CD4-positive, alpha-beta memory T cell (primary cell): ENCODE measurements at regions of chr10 and their contacts with region 1.

Region 1: GRCh38 chr10:49518982-49519578 is 19.8 kb downstream of the ERCC6 start:
- DNase-seq: peak in 4 of 5 donors; percentile 38 to 46 (median 40)
- H3K4me3 ChIP-seq: no peak overlapping the region
- H3K4me3 Mint-ChIP-seq: no peak overlapping the region
- H3K27ac ChIP-seq: no peak overlapping the region
- H3K27ac Mint-ChIP-seq: peak overlapping the region in 1 of 7 donors; percentile 64
- H3K4me1 ChIP-seq: no peaks in the 10 kb centered on the region
- H3K4me1 Mint-ChIP-seq: peaks cover 6 to 10% (median 8%) of the 10 kb centered on the region in 4 donors
- H3K27me3 ChIP-seq: no peaks in the 10 kb centered on the region
- H3K27me3 Mint-ChIP-seq: no peaks in the 10 kb centered on the region

Region 2: GRCh38 chr10:48363617-48364355 is 1155.3 kb before region 1 on chr10:
- CTCF ChIA-PET with region 1: interaction called, 3 read pairs
- POLR2A ChIA-PET with region 1: no interaction called
- intact Hi-C with region 1: loop called (anchors 10 kb)
- DNase-seq: peak in 4 of 5 donors; percentile 20 to 34 (median 25)
- H3K4me3 ChIP-seq: no peak overlapping the region
- H3K4me3 Mint-ChIP-seq: no peak overlapping the region
- H3K27ac ChIP-seq: no peak overlapping the region
- H3K27ac Mint-ChIP-seq: no peak overlapping the region
- H3K4me1 ChIP-seq: peaks cover 5% of the 10 kb centered on the region
- H3K4me1 Mint-ChIP-seq: peaks cover 14 to 26% (median 20%) of the 10 kb centered on the region in 4 donors
- H3K27me3 ChIP-seq: no peaks in the 10 kb centered on the region
- H3K27me3 Mint-ChIP-seq: no peaks in the 10 kb centered on the region

Region 3: GRCh38 chr10:48981310-48981907 is 537.7 kb before region 1 on chr10:
- CTCF ChIA-PET with region 1: interaction called, 4 read pairs
- POLR2A ChIA-PET with region 1: no interaction called
- intact Hi-C with region 1: loop called (anchors 2 kb)
- DNase-seq: peak in 4 of 5 donors; percentile 12 to 25 (median 22)
- H3K4me3 ChIP-seq: no peak overlapping the region
- H3K4me3 Mint-ChIP-seq: no peak overlapping the region
- H3K27ac ChIP-seq: no peak overlapping the region
- H3K27ac Mint-ChIP-seq: no peak overlapping the region
- H3K4me1 ChIP-seq: no peaks in the 10 kb centered on the region
- H3K4me1 Mint-ChIP-seq: no peaks in the 10 kb centered on the region
- H3K27me3 ChIP-seq: no peaks in the 10 kb centered on the region
- H3K27me3 Mint-ChIP-seq: peaks cover 0 to 2% of the 10 kb centered on the region in 2 donors

Region 4: GRCh38 chr10:49187950-49188761 is 330.9 kb before region 1 on chr10 and contains the start of gene TMEM273:
- CTCF ChIA-PET with region 1: no interaction called
- POLR2A ChIA-PET with region 1: no interaction called
- intact Hi-C with region 1: loop called (anchors 10 kb)
- DNase-seq: peak in 2 of 5 donors; percentile 33 to 70
- H3K4me3 ChIP-seq: peak within 1 kb of the TSS; percentile 22 to 62
- H3K4me3 Mint-ChIP-seq: peak within 1 kb of the TSS; percentile 60 to 88 (median 83)
- H3K27ac ChIP-seq: peak within 1 kb of the TSS; percentile 63
- H3K27ac Mint-ChIP-seq: peak within 1 kb of the TSS; percentile 61 to 90 (median 87)
- H3K4me1 ChIP-seq: peaks cover 41% of the 10 kb centered on the region
- H3K4me1 Mint-ChIP-seq: peaks cover 14 to 85% (median 37%) of the 10 kb centered on the region in 4 donors
- H3K27me3 ChIP-seq: no peaks in the 10 kb centered on the region
- H3K27me3 Mint-ChIP-seq: peaks cover 0 to 3% of the 10 kb centered on the region in 2 donors
- total RNA-seq, gene TMEM273: 27.7 to 30.4 TPM

Region 5: DNA sequence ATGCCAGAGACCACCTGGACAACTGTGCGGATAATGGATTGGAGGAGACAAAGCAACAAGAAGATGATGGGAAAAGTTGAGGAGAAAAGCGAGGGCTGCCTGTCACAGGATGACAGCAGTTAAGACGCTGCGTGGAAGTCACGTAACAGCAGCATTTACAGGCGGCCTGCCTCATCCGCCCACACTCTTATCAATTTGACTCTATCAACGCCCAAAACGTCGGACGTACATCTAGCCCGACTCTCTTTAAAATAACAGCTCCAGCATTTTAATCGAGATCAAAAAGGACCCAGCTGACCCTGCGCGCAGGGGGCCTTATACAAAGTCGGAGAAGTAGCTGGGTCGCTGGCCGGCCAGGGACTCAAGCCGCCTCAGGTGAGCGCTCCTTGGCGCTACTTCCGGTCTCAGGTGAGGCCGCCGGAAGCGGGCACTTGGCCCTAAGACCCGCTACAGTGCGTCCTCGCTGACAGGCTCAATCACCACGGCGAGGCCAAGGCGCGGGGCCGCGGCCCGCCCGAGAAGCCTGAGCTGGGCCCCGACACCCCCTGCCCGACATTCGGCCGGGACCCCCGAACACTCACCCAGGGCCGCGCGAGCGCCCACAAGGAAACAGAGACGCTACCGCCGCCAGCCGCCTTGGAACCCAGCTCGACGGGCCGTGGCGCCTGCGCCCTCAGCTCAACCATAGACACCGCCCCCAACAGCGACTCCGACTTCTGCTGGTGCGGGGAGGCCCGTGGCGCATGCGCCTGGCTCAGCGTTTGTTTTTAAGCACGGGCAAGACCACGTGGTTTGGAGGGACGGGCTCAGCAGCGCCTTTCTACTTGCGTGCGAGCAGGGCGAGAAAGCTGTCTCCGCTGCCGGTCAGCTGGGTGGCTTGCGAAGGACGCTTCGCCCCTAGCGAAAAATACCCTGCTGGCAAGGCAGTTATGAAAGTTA is 19.6 kb after region 1 on chr10 and contains the start of gene ERCC6:
- CTCF ChIA-PET with region 1: interaction called, 11 read pairs
- POLR2A ChIA-PET with region 1: interaction called, 5 read pairs
- intact Hi-C with region 1: no loop called
- DNase-seq: peak; percentile 92 to 97 (median 94)
- H3K4me3 ChIP-seq: peak within 1 kb of the TSS; percentile 77 to 78
- H3K4me3 Mint-ChIP-seq: peak within 1 kb of the TSS; percentile 92 to 98 (median 94)
- H3K27ac ChIP-seq: peak within 1 kb of the TSS; percentile 72
- H3K27ac Mint-ChIP-seq: peak within 1 kb of the TSS; percentile 93 to 98 (median 97)
- H3K4me1 ChIP-seq: peaks cover 17% of the 10 kb centered on the region
- H3K4me1 Mint-ChIP-seq: peaks cover 26 to 44% (median 36%) of the 10 kb centered on the region in 4 donors
- H3K27me3 ChIP-seq: no peaks in the 10 kb centered on the region
- H3K27me3 Mint-ChIP-seq: peaks cover 12 to 13% of the 10 kb centered on the region in 2 donors
- total RNA-seq, gene ERCC6: 46.0 to 46.7 TPM